ENCODE measurements at regions of chr3 and their contacts with region 1.

Region 1: DNA sequence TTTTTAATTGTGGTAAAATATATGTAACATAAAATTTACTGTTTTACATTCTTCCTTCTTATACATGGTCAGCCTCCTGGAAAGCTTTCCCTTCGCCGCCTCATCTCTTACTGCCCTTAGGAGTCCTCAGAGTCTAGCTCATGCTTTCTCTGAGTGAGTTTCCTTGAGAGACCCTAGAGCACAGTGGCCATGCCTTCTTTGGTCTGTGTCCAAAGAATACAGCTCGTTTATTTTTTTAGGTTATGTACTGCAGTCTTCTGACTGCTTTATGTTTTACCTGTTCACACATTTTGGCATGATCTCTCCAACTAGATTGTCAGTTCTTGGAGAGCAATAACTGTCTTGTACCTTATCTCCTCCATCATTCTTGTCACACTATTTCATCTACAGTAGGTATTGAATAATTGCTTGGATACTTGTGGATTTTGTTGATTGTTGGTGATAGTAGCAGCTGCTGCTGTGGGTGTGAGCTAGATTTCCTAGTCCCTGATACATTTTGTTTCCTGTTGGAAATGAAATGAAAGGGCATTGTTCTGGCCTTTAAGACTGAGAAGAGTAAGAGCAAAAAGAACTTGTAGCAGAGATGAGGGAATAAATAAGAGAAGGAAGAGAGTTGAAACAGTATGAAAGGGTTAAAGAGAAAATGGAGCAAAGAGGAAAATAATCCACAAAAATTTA is 10.9 kb downstream of the ARIH2 start:
- DNase-seq: no peak
- ATAC-seq: no peak
- H3K4me3 ChIP-seq: no peak overlapping the region
- H3K4me3 Mint-ChIP-seq: peak overlapping the region in 8 of 10 donors; percentile 0 to 54 (median 42)
- H3K27ac ChIP-seq: no peak overlapping the region
- H3K27ac Mint-ChIP-seq: peak overlapping the region in 4 of 9 donors; percentile 10 to 43 (median 28)
- H3K4me1 ChIP-seq: peaks cover 28 to 33% of the 10 kb centered on the region in 2 donors
- H3K4me1 Mint-ChIP-seq: peaks cover 54 to 81% (median 76%) of the 10 kb centered on the region in 7 donors
- H3K27me3 ChIP-seq: no peaks in the 10 kb centered on the region
- H3K27me3 Mint-ChIP-seq: no peaks in the 10 kb centered on the region

Region 2: GRCh38 chr3:48247401-48247811 is 682.1 kb before region 1 on chr3:
- CTCF ChIA-PET with region 1: no interaction called
- POLR2A ChIA-PET with region 1: no interaction called
- intact Hi-C with region 1: no loop called
- DNase-seq: no peak
- ATAC-seq: peak; percentile 57
- H3K4me3 ChIP-seq: no peak overlapping the region
- H3K4me3 Mint-ChIP-seq: peak overlapping the region in 1 of 10 donors; percentile 52
- H3K27ac ChIP-seq: no peak overlapping the region
- H3K27ac Mint-ChIP-seq: peak overlapping the region in 4 of 9 donors; percentile 4 to 80 (median 54)
- H3K4me1 ChIP-seq: peaks cover under 1 to 10% of the 10 kb centered on the region in 2 donors
- H3K4me1 Mint-ChIP-seq: peaks cover 9 to 39% (median 28%) of the 10 kb centered on the region in 7 donors
- H3K27me3 ChIP-seq: no peaks in the 10 kb centered on the region
- H3K27me3 Mint-ChIP-seq: no peaks in the 10 kb centered on the region

Region 3: GRCh38 chr3:48739955-48740823 is 189.3 kb before region 1 on chr3:
- CTCF ChIA-PET with region 1: no interaction called
- POLR2A ChIA-PET with region 1: no interaction called
- intact Hi-C with region 1: loop called in 1 of 2 experiments (anchors 5 kb)
- DNase-seq: peak; percentile 8 to 55 (median 35)
- ATAC-seq: peak; percentile 90
- H3K4me3 ChIP-seq: no peak overlapping the region
- H3K4me3 Mint-ChIP-seq: no peak overlapping the region
- H3K27ac ChIP-seq: no peak overlapping the region
- H3K27ac Mint-ChIP-seq: peak overlapping the region in 2 of 9 donors; percentile 1 to 6
- H3K4me1 ChIP-seq: no peaks in the 10 kb centered on the region
- H3K4me1 Mint-ChIP-seq: peaks cover 0 to 9% (median 0%) of the 10 kb centered on the region in 7 donors
- H3K27me3 ChIP-seq: no peaks in the 10 kb centered on the region
- H3K27me3 Mint-ChIP-seq: no peaks in the 10 kb centered on the region

Region 4: GRCh38 chr3:48966876-48967361 is 37.4 kb after region 1 on chr3:
- CTCF ChIA-PET with region 1: no interaction called
- POLR2A ChIA-PET with region 1: no interaction called
- intact Hi-C with region 1: loop called in 1 of 2 experiments (anchors 5 kb)
- DNase-seq: no peak
- ATAC-seq: no peak
- H3K4me3 ChIP-seq: no peak overlapping the region
- H3K4me3 Mint-ChIP-seq: peak overlapping the region in 2 of 10 donors; percentile 3 to 62
- H3K27ac ChIP-seq: no peak overlapping the region
- H3K27ac Mint-ChIP-seq: peak overlapping the region in 2 of 9 donors; percentile 20 to 33
- H3K4me1 ChIP-seq: no peaks in the 10 kb centered on the region
- H3K4me1 Mint-ChIP-seq: peaks cover 0 to 9% (median 4%) of the 10 kb centered on the region in 7 donors
- H3K27me3 ChIP-seq: no peaks in the 10 kb centered on the region
- H3K27me3 Mint-ChIP-seq: no peaks in the 10 kb centered on the region

Region 5: DNA sequence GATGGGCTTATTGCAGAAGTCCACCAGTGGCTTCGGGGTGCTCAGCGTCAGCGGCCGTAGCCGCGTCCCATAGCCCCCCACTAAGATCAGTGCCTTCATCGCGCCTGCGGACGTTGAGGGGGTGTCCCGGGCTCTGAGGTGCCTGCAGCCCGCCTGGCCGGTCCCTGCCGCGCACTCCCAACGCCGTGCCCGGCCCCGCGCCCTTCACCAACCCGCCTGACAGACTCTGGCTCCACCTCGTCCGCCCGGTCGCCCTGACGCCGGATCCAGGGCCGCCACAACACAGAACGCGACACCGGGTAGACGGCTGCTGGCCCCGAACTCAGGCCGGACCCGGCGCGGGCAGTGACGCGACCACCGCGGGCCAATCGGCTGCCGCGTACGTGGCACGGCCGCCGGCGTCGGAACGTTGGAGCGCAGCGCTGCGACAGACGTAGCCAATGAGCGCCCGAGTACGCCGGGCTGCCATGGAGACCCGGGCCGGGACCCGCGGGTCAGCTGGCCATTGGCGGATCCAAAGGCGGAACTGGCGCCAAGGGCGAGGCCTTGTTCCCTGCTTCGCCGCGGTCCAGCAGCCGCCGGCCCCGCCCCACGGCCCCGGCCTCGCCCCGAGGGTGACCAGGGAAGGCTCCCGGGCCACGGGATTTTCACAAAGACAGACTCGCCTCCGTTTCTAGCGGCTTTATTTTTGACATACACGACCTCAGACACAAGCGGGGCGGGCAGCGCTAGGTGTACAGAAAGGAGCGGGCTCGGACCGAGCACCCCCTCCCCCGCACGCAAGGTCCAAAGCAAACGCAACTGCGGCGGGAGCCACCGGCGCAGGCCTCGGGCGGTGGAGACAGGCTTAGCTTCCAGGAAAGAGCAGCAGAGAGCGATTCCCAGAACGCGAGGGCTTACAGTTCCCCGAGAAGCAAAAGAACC is 794.4 kb after region 1 on chr3 and contains the start of gene GMPPB:
- CTCF ChIA-PET with region 1: no interaction called
- POLR2A ChIA-PET with region 1: no interaction called
- intact Hi-C with region 1: no loop called
- DNase-seq: peak; percentile 83 to 95 (median 87)
- ATAC-seq: peak; percentile 85
- H3K4me3 ChIP-seq: peak within 1 kb of the TSS; percentile 89
- H3K4me3 Mint-ChIP-seq: peak within 1 kb of the TSS; percentile 91 to 98 (median 96)
- H3K27ac ChIP-seq: peak within 1 kb of the TSS; percentile 96
- H3K27ac Mint-ChIP-seq: peak within 1 kb of the TSS; percentile 82 to 99 (median 97)
- H3K4me1 ChIP-seq: peaks cover 11 to 17% of the 10 kb centered on the region in 2 donors
- H3K4me1 Mint-ChIP-seq: peaks cover 12 to 37% (median 31%) of the 10 kb centered on the region in 7 donors
- H3K27me3 ChIP-seq: no peaks in the 10 kb centered on the region
- H3K27me3 Mint-ChIP-seq: no peaks in the 10 kb centered on the region
- total RNA-seq, gene GMPPB: 38.3 to 60.4 (median 43.9) TPM

Measured in naive thymus-derived CD4-positive, alpha-beta T cell (primary cell).